ENCODE measurements at regions of chr4 and their contacts with region 1.

Region 1: GRCh38 chr4:163332500-163333406 is at the start of gene NPY1R:
- DNase-seq: peak; percentile 73
- H3K4me3 ChIP-seq: peak within 1 kb of the TSS; percentile 52 to 63 (median 59)
- H3K27ac ChIP-seq: no peak within 1 kb of the TSS
- H3K4me1 ChIP-seq: peaks cover 12% of the 10 kb centered on the region
- H3K27me3 ChIP-seq: peaks cover 12% of the 10 kb centered on the region
- CTCF ChIP-seq: peak; percentile 56 to 86
- total RNA-seq, gene NPY1R: 0.67 TPM in 1 of 2 donors, not detected in the other

Region 2: GRCh38 chr4:162497564-162498167 is 835.1 kb before region 1 on chr4:
- CTCF ChIA-PET with region 1: no interaction called
- dilution Hi-C with region 1: no loop called
- in situ Hi-C with region 1: loop called in 1 of 2 experiments (anchors 25 kb)
- intact Hi-C with region 1: loop called (anchors 1 kb)
- DNase-seq: peak; percentile 25
- H3K4me3 ChIP-seq: no peak overlapping the region
- H3K27ac ChIP-seq: no peak overlapping the region
- H3K4me1 ChIP-seq: no peaks in the 10 kb centered on the region
- H3K27me3 ChIP-seq: no peaks in the 10 kb centered on the region
- CTCF ChIP-seq: peak; percentile 46 to 82

Region 3: DNA sequence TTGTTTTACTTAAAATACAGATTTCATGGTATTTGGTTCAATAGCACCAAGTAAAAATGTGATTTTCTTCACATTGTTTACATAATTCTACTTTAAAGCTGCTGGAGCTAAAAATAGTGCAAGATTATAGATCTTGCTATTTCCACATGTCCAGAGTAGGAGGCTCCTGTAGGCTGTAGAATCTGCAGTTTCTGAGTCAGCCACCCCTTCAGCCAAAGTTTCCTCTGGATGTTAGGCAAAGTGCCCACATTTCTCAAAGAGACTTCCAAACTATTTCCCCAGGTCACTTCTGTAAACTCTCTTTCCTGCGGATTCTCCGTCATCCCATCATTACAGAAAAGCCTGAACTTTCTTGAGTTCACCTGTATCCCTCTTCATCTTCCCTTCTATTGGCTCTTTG is 826.5 kb before region 1 on chr4:
- CTCF ChIA-PET with region 1: no interaction called
- dilution Hi-C with region 1: no loop called
- in situ Hi-C with region 1: loop called in 1 of 2 experiments (anchors 25 kb)
- intact Hi-C with region 1: no loop called
- DNase-seq: no peak
- H3K4me3 ChIP-seq: no peak overlapping the region
- H3K27ac ChIP-seq: no peak overlapping the region
- H3K4me1 ChIP-seq: no peaks in the 10 kb centered on the region
- H3K27me3 ChIP-seq: no peaks in the 10 kb centered on the region
- CTCF ChIP-seq: no peak

Region 4: GRCh38 chr4:162645381-162645780 is 687.4 kb before region 1 on chr4:
- CTCF ChIA-PET with region 1: interaction called, 12 read pairs
- dilution Hi-C with region 1: no loop called
- in situ Hi-C with region 1: no loop called
- intact Hi-C with region 1: loop called (anchors 1 kb)
- DNase-seq: no peak
- H3K4me3 ChIP-seq: no peak overlapping the region
- H3K27ac ChIP-seq: no peak overlapping the region
- H3K4me1 ChIP-seq: peaks cover 7% of the 10 kb centered on the region
- H3K27me3 ChIP-seq: no peaks in the 10 kb centered on the region
- CTCF ChIP-seq: peak in 1 of 2 donors; percentile 35

Region 5: GRCh38 chr4:163048447-163048846 is 284.3 kb before region 1 on chr4:
- CTCF ChIA-PET with region 1: no interaction called
- dilution Hi-C with region 1: no loop called
- in situ Hi-C with region 1: no loop called
- intact Hi-C with region 1: loop called (anchors 1 kb)
- DNase-seq: peak; percentile 21
- H3K4me3 ChIP-seq: no peak overlapping the region
- H3K27ac ChIP-seq: no peak overlapping the region
- H3K4me1 ChIP-seq: no peaks in the 10 kb centered on the region
- H3K27me3 ChIP-seq: no peaks in the 10 kb centered on the region
- CTCF ChIP-seq: peak; percentile 59 to 72

Measured in mammary epithelial cell (primary cell).